Endothelial cell of umbilical vein (primary cell): ENCODE measurements at regions of chr20 and their contacts with region 1.

Region 1: GRCh38 chr20:35854713-35855434 is 83.1 kb downstream of the PHF20 start:
- DNase-seq: no peak
- H3K4me3 ChIP-seq: no peak overlapping the region
- H3K27ac ChIP-seq: no peak overlapping the region
- H3K4me1 ChIP-seq: no peaks in the 10 kb centered on the region
- H3K27me3 ChIP-seq: no peaks in the 10 kb centered on the region
- CTCF ChIP-seq: no peak
- POLR2A ChIP-seq: no peak

Region 2: DNA sequence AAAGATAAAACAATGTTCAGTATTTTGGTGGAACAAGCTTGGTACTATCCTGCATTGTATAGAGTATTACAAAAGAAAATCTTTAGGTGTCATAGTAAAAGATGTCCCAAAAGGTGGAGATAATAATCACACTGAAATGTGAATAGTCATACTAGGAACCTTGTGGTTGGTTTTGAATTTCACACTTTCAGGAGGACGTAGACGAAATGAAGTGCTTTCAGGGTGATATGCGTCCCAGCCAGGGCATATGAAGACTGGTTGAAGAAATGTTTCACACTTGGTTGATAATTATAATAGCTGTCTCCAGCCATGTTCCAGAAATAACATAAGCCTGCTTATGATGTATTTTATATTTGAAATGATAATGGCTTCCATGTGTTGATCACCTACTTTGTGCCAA is 39.1 kb after region 1 on chr20:
- CTCF ChIA-PET with region 1: no interaction called
- POLR2A ChIA-PET with region 1: no interaction called
- dilution Hi-C with region 1: no loop called
- intact Hi-C with region 1: loop called (anchors 1 kb)
- DNase-seq: no peak
- H3K4me3 ChIP-seq: no peak overlapping the region
- H3K27ac ChIP-seq: no peak overlapping the region
- H3K4me1 ChIP-seq: no peaks in the 10 kb centered on the region
- H3K27me3 ChIP-seq: no peaks in the 10 kb centered on the region
- CTCF ChIP-seq: no peak
- POLR2A ChIP-seq: no peak